ENCODE measurements at regions of chr2 and their contacts with region 1.

Region 1: DNA sequence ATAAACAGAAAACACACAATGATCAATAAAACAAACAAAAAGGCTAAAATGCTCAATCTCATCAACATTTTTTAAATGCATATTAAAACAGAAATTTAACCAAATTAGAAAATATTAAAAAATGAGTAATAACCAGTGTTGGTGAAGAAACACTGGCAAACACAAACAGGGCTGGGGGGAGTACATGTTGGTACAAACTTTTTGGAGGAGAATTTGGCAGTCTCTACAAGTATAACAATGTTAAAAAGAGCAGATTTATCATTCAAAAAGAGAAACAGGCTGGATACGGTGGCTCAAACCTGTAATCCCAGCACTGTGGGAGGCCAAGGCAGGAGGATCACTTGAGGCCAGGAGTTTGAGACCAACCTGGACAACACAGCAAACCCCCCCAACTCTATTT is 13.9 kb downstream of the MOB1A start:
- DNase-seq: no peak
- H3K4me3 ChIP-seq: no peak overlapping the region
- H3K27ac ChIP-seq: no peak overlapping the region
- H3K4me1 ChIP-seq: no peaks in the 10 kb centered on the region
- H3K27me3 ChIP-seq: no peaks in the 10 kb centered on the region
- CTCF ChIP-seq: no peak
- EP300 ChIP-seq: no peak
- POLR2A ChIP-seq: no peak

Region 2: DNA sequence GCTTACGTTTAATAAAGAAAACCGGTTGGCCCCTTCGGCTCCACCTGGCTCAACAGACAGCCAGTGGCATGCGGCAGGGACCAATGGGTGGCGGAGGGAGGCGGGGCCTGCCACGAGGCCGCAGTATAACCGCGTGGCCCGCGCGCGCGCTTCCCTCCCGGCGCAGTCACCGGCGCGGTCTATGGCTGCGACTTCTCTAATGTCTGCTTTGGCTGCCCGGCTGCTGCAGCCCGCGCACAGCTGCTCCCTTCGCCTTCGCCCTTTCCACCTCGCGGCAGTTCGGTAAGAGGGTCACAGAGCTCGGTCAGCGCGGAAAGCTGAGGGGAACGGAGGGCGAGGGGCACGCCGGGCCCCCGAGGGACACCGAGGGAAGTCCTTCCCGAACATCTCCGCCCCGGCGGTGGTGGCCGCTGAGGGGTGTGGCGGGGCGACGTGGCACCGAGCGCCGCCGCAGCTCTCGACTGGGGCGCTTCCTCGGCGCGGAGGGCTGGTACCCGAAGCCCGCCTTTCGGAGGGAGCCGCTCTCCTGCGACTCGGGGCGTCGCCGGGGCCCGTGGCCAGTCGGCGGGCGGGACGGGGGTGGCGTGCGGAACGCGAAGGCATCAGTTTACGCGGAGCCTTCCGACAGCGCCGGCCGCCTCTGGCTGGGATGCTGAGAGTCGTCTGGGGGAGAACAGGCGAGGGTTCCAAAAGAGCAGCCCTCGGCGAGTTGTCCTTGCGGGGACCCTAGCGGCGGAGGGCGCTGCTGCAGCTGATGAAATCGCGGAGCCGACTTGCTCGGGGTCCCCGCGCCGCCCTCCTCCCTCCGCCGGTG is 33.9 kb after region 1 on chr2 and contains the start of gene MTHFD2:
- in situ Hi-C with region 1: no loop called
- intact Hi-C with region 1: loop called (anchors 1 kb)
- DNase-seq: peak; percentile 94
- H3K4me3 ChIP-seq: peak within 1 kb of the TSS; percentile 55 to 92 (median 78)
- H3K27ac ChIP-seq: peak within 1 kb of the TSS; percentile 90 to 98 (median 94)
- H3K4me1 ChIP-seq: peaks cover 9 to 31% (median 17%) of the 10 kb centered on the region in 4 donors
- H3K27me3 ChIP-seq: no peaks in the 10 kb centered on the region
- CTCF ChIP-seq: peak; percentile 73 to 87 (median 78)
- EP300 ChIP-seq: no peak
- POLR2A ChIP-seq: peak; percentile 89
- total RNA-seq, gene MTHFD2: 2.2 to 220 (median 17.8) TPM

Measured in transverse colon (tissue), 4 donors.